HEK293 (cell line): ENCODE measurements at regions of chr1 and their contacts with region 1.

Region 1: DNA sequence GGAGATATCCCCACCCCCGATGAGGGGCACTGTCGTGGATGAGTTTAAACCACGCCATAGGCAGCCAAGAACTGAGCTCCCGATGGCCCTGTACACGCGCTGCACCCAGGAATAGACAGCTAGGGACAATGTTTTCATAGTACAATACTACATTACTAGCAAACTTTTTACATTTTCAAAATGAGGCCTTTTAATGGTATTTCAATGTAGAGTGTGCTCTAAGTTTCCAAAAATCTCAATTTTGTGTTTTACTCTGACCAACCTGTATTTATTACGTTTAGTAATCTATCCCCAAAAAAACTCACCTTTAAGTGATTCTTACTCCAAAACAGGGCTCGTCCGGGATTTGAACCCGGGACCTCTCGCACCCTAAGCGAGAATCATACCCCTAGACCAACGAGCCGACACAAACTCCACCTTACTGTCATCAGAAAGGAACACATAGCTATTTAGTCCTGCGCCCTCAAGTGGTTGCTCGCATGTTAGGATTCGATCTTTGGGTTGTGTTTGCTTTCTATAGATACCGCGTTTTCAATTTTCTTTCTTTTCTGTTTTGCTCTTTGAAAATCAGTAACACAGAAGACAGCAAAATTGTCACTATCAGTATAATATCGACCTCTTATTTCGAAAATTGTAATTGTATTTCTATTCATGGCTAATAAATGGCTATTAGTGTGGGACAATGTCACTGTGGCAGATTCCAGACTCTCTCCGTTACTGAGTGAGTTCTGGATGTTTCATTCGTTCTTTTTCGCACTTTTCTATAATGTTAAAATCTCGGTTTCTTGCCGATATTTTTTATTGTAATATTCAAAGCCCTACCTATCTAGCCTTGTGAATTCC is 6.4 kb upstream of the MPZL1 start:
- H3K4me3 ChIP-seq: peak overlapping the region; percentile 99
- H3K27ac ChIP-seq: peak overlapping the region; percentile 28; the same call in 1 of the 2 replicates
- H3K4me1 ChIP-seq: no peaks in the 10 kb centered on the region
- CTCF ChIP-seq: peak; percentile 97

Region 2: DNA sequence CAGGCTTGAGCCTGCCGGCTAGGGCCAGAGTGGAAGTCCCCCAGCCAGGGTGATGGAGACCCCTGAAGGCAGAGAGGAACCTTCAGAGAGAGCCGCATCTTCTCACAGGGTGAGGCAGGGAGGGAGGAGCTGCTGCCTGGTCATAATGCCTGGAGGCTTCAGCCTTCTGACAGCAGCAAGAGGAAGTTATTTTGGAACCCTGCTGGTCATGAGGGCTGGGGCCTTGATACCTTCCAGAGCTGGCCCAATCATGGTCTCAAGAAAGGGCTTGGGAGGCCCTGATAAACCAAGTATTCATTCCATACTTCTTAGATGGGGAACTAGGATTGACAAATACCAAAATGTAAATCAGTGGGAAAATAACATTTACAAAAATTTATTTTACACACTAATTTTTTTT is 20.2 kb before region 1 on chr1:
- CTCF ChIA-PET with region 1: no interaction called
- POLR2A ChIA-PET with region 1: no interaction called
- H3K4me3 ChIP-seq: no peak overlapping the region
- H3K27ac ChIP-seq: no peak overlapping the region
- H3K4me1 ChIP-seq: no peaks in the 10 kb centered on the region
- CTCF ChIP-seq: no peak

Region 3: GRCh38 chr1:167904652-167905130 is 189.3 kb after region 1 on chr1:
- CTCF ChIA-PET with region 1: no interaction called
- POLR2A ChIA-PET with region 1: no interaction called
- H3K4me3 ChIP-seq: no peak overlapping the region
- H3K27ac ChIP-seq: no peak overlapping the region
- H3K4me1 ChIP-seq: peaks cover 3% of the 10 kb centered on the region; the same call in 1 of the 2 replicates
- CTCF ChIP-seq: no peak

Region 4: DNA sequence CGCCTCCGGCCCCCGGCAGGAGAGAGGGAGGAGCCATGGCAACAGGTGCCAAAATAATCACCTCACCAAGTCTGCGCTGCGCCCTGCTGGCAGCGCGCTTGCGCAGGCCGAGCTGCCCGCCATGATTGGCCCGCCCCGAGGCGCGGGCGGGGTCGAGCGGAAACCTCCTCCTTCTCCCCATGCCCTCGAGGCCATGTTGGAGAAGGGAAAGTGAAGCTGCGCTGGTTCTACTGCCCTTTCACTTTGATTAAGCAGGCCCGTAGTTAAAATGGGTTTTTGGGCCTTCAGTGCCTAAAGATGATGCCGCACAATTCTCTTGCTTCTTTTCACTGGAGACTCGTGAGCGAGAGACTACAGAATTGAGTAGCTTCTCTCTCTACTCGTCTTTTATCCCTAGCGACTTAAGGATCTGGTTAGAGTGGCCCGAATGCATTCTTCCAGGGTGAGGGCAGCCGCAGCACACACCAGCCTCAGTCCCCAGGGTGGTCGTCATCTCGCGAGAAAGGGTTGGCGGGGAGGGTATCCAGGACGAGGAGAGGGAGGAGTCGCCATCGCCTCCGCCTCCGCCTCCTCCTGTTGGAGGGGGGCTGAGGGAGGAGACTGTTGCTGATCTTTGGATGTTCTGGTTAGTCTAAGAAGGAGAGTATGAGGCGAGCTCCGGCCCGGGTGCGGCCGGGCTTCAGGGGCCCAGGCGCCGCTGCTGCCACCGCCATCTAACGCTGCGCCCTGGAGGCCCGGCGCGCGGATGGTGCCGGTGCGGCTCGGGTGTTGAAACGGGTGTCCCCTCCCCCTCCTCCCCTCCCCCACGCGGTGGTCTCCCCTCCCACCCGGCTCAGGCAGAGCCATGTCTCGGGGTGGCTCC is 220.9 kb after region 1 on chr1 and contains the start of gene DCAF6:
- CTCF ChIA-PET with region 1: interaction called, 3 read pairs
- POLR2A ChIA-PET with region 1: interaction called, 23 read pairs
- H3K4me3 ChIP-seq: peak within 1 kb of the TSS; percentile 92
- H3K27ac ChIP-seq: peak within 1 kb of the TSS; percentile 88
- H3K4me1 ChIP-seq: no peaks in the 10 kb centered on the region; the same call in 1 of the 2 replicates
- CTCF ChIP-seq: no peak